Activated naive CD4-positive, alpha-beta T cell treated with anti-CD3 and anti-CD28 coated beads for 36 hours (primary cell): ENCODE measurements at regions of chr10 and their contacts with region 1.

Region 1: GRCh38 chr10:66698069-66698468 is 227.8 kb upstream of the LRRTM3 start:
- DNase-seq: no peak
- H3K4me3 Mint-ChIP-seq: no peak overlapping the region
- H3K27ac Mint-ChIP-seq: no peak overlapping the region
- H3K4me1 Mint-ChIP-seq: no peaks in the 10 kb centered on the region
- H3K27me3 Mint-ChIP-seq: no peaks in the 10 kb centered on the region

Region 2: DNA sequence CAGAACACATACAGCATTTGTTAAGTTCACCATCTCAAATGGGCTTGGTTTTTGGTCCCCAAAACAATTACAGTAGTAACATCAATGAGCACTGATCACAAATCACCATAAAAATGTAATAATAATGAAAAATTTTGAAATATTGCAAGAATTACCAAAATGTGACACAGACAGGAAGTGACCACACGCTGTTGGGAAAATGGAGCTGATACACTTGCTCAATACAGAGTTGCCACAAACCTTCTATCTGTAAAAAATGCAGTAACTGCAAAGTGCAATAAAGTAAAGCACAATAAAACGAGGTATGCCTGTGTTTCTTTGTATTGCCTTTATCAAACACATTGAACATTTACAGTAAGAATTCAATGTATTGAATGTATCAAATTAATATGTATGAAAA is 735.2 kb after region 1 on chr10:
- CTCF ChIA-PET with region 1: no interaction called
- intact Hi-C with region 1: loop called (anchors 5 kb)
- DNase-seq: no peak
- H3K4me3 Mint-ChIP-seq: no peak overlapping the region
- H3K27ac Mint-ChIP-seq: no peak overlapping the region
- H3K4me1 Mint-ChIP-seq: no peaks in the 10 kb centered on the region
- H3K27me3 Mint-ChIP-seq: peaks cover 5% of the 10 kb centered on the region